ENCODE measurements at regions of chr15 and their contacts with region 1.

Region 1: GRCh38 chr15:31435261-31435911 is 108.8 kb downstream of the KLF13 start:
- DNase-seq: peak; percentile 77
- ATAC-seq: peak; percentile 72
- H3K4me3 Mint-ChIP-seq: peak overlapping the region; percentile 66
- H3K27ac Mint-ChIP-seq: peak overlapping the region; percentile 91
- H3K4me1 Mint-ChIP-seq: peaks cover 67% of the 10 kb centered on the region
- H3K27me3 Mint-ChIP-seq: no peaks in the 10 kb centered on the region

Region 2: GRCh38 chr15:31265871-31266711 is 169.3 kb before region 1 on chr15:
- POLR2A ChIA-PET with region 1: interaction called, 10 read pairs
- DNase-seq: peak; percentile 73
- ATAC-seq: peak; percentile 79
- H3K4me3 Mint-ChIP-seq: peak overlapping the region; percentile 84
- H3K27ac Mint-ChIP-seq: peak overlapping the region; percentile 99
- H3K4me1 Mint-ChIP-seq: peaks cover 75% of the 10 kb centered on the region
- H3K27me3 Mint-ChIP-seq: no peaks in the 10 kb centered on the region

Region 3: GRCh38 chr15:31352911-31353811 is 82.2 kb before region 1 on chr15:
- POLR2A ChIA-PET with region 1: interaction called, 227 read pairs
- DNase-seq: peak; percentile 61
- ATAC-seq: peak; percentile 42
- H3K4me3 Mint-ChIP-seq: peak overlapping the region; percentile 80
- H3K27ac Mint-ChIP-seq: peak overlapping the region; percentile 100
- H3K4me1 Mint-ChIP-seq: peaks cover 83% of the 10 kb centered on the region
- H3K27me3 Mint-ChIP-seq: no peaks in the 10 kb centered on the region

Region 4: DNA sequence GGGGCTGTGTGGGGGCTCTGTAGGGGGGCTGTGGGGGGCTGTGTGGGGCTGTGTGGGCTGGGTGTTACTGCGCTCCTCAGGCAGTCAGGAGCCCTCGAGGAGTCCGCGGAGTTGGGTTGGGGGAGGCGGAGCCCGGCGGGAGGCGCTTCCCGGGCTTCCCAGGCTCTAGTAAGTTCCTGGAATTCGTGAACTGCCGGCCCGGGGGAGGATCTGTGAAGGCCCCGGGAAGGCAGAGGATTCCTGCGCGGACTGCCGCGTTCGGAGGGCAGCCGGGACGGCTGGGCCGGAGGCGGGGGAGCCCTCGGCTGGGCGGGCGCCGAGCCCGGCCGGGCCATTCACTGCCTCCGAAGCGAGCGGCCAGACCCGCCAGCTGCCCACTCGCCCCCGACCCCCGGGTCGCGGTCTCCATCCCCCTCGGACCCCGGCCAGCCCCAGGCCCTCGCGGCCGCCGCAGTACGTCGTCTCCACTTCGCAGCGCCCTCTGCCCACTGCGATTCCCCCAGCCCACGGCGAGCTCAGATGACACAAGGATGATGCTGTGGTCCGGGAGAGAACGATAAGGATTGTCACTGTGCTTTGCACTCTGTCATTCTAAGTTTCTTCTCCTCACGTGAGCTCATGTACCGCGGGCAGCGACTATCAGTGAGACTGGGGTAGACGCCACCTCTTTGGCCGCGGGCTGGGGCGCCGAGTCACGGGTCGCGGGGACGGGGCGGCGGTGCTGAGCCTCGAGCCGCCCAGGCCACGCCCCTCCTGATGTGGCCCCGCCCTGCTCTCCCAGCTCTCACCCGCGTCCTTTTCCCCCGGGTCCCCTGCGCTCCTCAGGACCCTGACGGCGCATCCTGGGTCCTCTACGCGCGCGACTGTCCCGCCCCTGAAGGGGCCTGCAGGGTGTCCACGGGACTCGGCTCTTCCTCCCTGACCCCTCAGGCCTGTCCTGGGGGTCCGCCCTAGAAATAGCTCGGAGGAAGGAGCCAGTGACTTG is 43.4 kb before region 1 on chr15:
- POLR2A ChIA-PET with region 1: interaction called, 76 read pairs
- DNase-seq: peak; percentile 93
- ATAC-seq: peak; percentile 80
- H3K4me3 Mint-ChIP-seq: peak overlapping the region; percentile 93
- H3K27ac Mint-ChIP-seq: peak overlapping the region; percentile 92
- H3K4me1 Mint-ChIP-seq: peaks cover 37% of the 10 kb centered on the region
- H3K27me3 Mint-ChIP-seq: no peaks in the 10 kb centered on the region

Region 5: DNA sequence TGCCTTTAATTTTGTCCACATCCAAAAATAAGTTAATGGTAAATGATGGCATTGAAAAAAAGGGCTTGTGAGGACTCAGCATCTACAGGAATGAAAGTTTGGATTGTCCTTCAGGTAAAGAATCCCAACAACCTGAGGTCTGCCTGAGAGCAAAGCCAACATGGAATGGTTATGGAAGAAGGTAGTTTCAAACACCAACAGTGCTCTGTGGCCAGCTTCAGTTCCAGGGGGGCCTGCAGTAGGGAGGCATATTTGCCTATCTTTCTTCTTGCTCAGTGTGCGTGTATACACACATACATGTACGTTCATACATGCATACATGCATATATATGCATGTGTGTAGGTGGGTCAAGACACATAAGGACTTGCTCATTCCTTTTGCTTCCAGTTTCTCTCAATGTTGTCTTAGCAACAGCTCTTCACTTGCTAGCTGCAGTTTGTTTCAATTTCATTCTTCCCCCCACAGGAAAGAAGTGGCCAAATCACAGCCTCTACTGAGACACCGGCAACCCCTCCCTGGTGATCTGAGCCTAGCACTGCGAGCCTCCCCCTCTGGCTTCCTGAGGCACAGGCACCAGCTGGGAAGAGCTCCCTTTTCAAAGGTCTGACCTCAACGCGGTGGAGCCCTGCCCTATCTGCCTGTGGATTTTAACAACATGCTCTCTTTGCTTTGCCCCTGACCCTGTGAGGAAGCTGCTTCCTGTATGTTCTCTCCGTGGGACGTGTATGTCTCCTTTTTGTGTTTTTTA is 37.4 kb after region 1 on chr15:
- POLR2A ChIA-PET with region 1: interaction called, 60 read pairs
- DNase-seq: peak; percentile 60
- ATAC-seq: peak; percentile 89
- H3K4me3 Mint-ChIP-seq: peak overlapping the region; percentile 80
- H3K27ac Mint-ChIP-seq: peak overlapping the region; percentile 91
- H3K4me1 Mint-ChIP-seq: peaks cover 38% of the 10 kb centered on the region
- H3K27me3 Mint-ChIP-seq: no peaks in the 10 kb centered on the region

Region 6: DNA sequence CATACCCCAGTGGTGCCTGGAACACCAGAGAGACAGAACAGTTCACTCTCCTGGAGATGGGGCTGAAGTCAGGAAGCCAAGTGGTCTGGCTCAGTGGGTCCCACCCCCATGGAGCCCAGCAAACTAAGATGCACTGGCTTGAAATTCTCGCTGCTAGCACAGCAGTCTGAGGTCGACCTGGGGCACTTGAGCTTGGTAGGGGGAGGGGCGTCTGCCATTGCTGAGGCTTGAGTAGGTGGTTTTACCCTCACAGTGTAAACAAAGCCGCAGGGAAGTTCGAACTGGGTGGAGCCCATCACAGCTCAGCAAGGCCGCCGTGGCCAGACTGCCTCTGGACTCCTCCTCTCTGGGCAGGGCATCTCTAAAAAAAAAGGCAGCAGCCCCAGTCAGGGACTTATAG is 163.2 kb after region 1 on chr15:
- POLR2A ChIA-PET with region 1: no interaction called
- DNase-seq: no peak
- ATAC-seq: no peak
- H3K4me3 Mint-ChIP-seq: no peak overlapping the region
- H3K27ac Mint-ChIP-seq: no peak overlapping the region
- H3K4me1 Mint-ChIP-seq: no peaks in the 10 kb centered on the region
- H3K27me3 Mint-ChIP-seq: peaks cover 10% of the 10 kb centered on the region